HCT116 (cell line): ENCODE measurements at regions of chr11 and their contacts with region 1.

Region 1: GRCh38 chr11:29019960-29020683 is 911.9 kb downstream of the METTL15 start:
- DNase-seq: peak; percentile 29
- ATAC-seq: peak; percentile 83
- H3K4me3 ChIP-seq: no peak overlapping the region
- H3K27ac ChIP-seq: no peak overlapping the region
- H3K4me1 ChIP-seq: peaks cover 0 to 3% of the 10 kb centered on the region in 2 experiments; a peak in 1 of 4 replicates
- H3K27me3 ChIP-seq: no peaks in the 10 kb centered on the region
- CTCF ChIP-seq: peak; percentile 54 to 75 (median 73); a peak in 5 of 6 replicates
- POLR2A ChIP-seq: no peak
- RAD21 ChIP-seq: peak; percentile 71

Region 2: DNA sequence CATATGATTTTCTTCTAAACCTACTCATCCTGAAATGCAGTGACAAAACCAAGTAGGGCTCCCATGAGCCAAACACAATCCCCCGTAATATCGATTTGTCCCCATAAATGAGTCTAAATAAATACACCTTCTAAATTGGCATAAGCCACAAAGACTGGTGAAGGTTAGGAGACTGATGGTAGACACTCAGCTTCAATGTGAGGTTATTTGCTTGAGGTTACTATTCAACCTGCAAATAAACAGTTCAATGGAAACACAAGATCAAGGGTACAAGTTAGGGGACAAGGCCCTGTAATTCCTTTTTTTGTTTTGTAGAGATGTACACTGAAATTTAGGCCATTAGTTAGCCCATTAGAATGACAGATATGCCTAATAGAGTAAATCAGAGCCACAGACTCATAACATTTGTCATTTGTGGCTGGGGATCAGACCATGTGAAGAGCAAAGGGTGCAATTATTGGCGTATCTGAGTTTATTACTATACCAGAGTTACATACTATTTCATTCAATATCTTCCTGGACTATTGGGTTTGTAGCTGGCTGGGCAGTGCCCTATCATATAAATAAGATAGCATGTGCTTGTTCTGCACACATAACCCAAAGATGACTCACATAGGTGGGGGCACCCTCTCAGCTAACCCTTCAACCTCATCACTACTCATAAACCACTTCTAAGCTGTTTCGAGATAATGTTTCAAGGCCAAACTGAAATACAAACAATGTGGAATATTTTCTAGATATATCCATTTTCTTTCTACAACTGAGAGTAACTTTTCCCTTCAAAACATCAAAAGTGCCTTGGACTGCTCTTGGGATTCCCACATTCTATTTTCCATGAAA is 301.4 kb after region 1 on chr11:
- CTCF ChIA-PET with region 1: no interaction called
- POLR2A ChIA-PET with region 1: no interaction called
- RAD21 ChIA-PET with region 1: no interaction called
- intact Hi-C with region 1: loop called (anchors 5 kb)
- DNase-seq: peak; percentile 39
- ATAC-seq: peak; percentile 93
- H3K4me3 ChIP-seq: no peak overlapping the region
- H3K27ac ChIP-seq: no peak overlapping the region
- H3K4me1 ChIP-seq: peaks cover 10 to 14% of the 10 kb centered on the region in 2 experiments; a peak in 3 of 4 replicates
- H3K27me3 ChIP-seq: no peaks in the 10 kb centered on the region
- CTCF ChIP-seq: no peak
- POLR2A ChIP-seq: no peak
- RAD21 ChIP-seq: no peak